ENCODE measurements at regions of chr5 and their contacts with region 1.

Region 1: GRCh38 chr5:96868603-96869371 is 7.5 kb upstream of the ERAP2 start:
- DNase-seq: peak; percentile 76
- ATAC-seq: peak; percentile 97
- H3K4me3 ChIP-seq: no peak overlapping the region
- H3K27ac ChIP-seq: no peak overlapping the region
- H3K4me1 ChIP-seq: peaks cover 7% of the 10 kb centered on the region; the same call in 1 of the 2 replicates
- H3K27me3 ChIP-seq: no peaks in the 10 kb centered on the region
- CTCF ChIP-seq: peak; percentile 94

Region 2: GRCh38 chr5:96823900-96824351 is 44.9 kb before region 1 on chr5:
- CTCF ChIA-PET with region 1: no interaction called
- POLR2A ChIA-PET with region 1: no interaction called
- intact Hi-C with region 1: no loop called
- DNase-seq: peak; percentile 96
- ATAC-seq: peak; percentile 100
- H3K4me3 ChIP-seq: no peak overlapping the region
- H3K27ac ChIP-seq: peak overlapping the region; percentile 71
- H3K4me1 ChIP-seq: peaks cover 29% of the 10 kb centered on the region
- H3K27me3 ChIP-seq: no peaks in the 10 kb centered on the region
- CTCF ChIP-seq: no peak

Region 3: GRCh38 chr5:97162045-97162444 is 293.3 kb after region 1 on chr5:
- CTCF ChIA-PET with region 1: no interaction called
- POLR2A ChIA-PET with region 1: no interaction called
- intact Hi-C with region 1: loop called (anchors 1 kb)
- DNase-seq: peak; percentile 87
- ATAC-seq: peak; percentile 84
- H3K4me3 ChIP-seq: no peak overlapping the region
- H3K27ac ChIP-seq: no peak overlapping the region
- H3K4me1 ChIP-seq: 0 out of 2 replicates have a peak, but pooled peaks cover 4% of the 10 kb centered on the region
- H3K27me3 ChIP-seq: no peaks in the 10 kb centered on the region
- CTCF ChIP-seq: peak; percentile 94